IMR-90 (cell line): ENCODE measurements at regions of chr5 and their contacts with region 1.

Region 1: DNA sequence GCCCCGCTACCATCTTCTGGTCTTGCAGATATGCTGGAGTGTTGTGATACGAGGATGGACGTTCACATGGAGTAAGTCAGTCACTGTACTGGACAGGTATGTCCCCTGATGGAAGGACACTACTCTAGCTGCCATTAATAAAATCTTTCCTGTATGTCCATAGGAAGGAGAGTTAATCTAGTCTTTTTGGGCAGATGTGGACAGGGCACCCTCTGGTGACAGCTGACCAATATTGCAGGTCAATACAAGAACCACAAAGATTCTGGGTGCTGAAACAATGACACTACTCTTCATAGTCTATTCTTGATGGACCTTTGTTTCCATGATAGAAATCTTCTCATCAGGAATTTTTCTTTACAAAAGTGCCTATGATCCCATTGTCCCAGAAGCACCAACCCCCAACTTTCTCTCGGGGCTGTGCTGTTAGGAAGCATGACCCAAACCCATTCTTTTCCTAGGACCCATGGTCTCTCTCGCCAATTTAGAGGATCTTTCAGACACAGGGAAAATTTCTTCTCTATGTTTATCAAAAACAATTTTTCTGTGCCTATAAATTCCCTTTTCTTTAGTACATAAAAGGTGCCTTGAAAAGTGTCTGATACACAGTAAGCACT is 376.9 kb downstream of the DTWD2 start:
- DNase-seq: peak; percentile 17
- ATAC-seq: peak; percentile 73
- H3K4me3 ChIP-seq: no peak overlapping the region
- H3K27ac ChIP-seq: no peak overlapping the region
- H3K4me1 ChIP-seq: no peaks in the 10 kb centered on the region
- H3K27me3 ChIP-seq: no peaks in the 10 kb centered on the region
- CTCF ChIP-seq: peak; percentile 56
- POLR2A ChIP-seq: no peak
- RAD21 ChIP-seq: peak; percentile 70

Region 2: DNA sequence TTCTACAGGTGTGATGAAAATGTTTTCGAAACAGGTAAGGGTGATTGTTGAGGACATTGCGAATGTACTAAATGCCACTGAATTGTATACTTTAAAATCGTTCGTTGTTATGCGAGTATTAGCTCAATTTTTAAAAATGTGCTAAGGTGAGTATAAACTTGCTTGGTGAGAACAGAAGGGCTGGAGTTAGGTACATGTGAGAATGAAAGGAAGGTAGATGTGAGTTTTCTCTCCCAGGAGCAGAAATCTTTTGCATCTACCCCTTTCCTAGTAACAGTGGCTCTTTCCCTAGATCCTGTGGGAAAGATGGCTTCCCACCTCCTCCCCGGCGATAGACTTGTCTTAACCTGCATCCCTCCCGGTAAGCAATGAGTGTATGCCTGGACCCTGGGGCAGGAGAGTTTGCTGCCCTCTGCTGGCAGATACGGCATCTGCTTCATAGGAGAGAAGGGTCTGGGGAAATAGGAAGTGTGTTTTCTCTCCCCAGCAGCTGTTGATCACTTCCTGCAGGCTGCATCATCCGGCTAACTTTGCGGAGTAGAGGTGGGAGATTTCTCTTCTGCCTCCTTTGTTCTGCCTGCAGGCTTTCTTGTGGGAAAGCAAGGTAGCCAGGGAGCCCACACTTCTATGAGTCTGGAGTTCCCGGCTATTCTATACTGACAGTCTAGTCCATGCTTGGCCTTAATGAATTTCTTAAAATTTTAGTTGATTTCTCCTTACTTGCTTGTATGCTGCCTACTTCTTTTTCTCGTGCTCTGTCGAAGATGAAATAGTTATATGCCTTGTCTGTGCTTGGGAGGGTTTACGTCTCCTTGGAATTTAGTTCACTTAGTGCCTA is 1663.5 kb before region 1 on chr5:
- CTCF ChIA-PET with region 1: no interaction called
- POLR2A ChIA-PET with region 1: no interaction called
- dilution Hi-C with region 1: no loop called
- in situ Hi-C with region 1: no loop called
- intact Hi-C with region 1: loop called (anchors 10 kb)
- DNase-seq: no peak
- ATAC-seq: no peak
- H3K4me3 ChIP-seq: no peak overlapping the region
- H3K27ac ChIP-seq: no peak overlapping the region
- H3K4me1 ChIP-seq: no peaks in the 10 kb centered on the region
- H3K27me3 ChIP-seq: no peaks in the 10 kb centered on the region
- CTCF ChIP-seq: no peak
- POLR2A ChIP-seq: no peak
- RAD21 ChIP-seq: no peak

Region 3: DNA sequence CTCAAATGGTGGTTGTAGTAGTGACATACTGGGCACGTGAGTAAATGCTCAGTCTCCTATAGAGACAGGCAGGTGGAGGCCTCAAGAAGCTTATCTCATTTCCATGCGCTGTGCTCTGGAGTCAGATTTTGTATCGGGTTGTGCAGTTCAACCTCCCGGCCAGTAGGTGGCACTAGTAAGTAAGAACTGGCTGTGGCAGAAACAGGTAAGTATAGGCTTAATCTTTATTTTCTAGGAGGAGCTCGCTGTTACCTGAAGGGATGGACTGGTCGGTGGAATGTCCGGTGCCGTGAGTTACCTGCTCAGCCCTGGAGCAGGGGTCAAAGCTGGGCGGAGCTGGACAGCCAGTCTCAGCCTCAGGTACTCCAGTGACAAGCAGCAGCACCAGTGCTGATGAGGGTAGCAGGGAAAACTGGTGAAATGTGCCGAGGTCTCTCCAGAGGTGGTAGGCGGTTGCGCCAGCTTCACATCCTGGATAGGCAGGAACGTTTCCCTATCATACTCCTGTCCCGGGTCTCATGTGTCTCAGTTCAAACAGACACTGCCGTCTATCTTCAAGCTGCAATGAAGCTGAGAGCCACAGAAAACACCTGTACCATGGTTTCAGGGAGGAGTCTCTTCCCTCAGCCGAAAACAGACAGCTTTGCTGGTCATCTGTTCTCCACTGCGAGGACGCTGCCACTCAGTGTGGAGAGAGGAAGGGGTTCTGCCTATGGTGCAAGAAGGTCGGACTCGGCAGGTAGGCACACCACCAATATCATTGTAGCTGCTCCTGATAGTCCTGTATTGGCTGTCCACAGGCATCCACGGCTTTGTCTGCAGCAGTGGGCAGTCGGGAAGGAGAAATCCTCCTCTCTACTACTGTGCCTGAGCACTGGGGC is 1156.5 kb before region 1 on chr5:
- CTCF ChIA-PET with region 1: no interaction called
- POLR2A ChIA-PET with region 1: no interaction called
- dilution Hi-C with region 1: no loop called
- in situ Hi-C with region 1: no loop called
- intact Hi-C with region 1: no loop called
- DNase-seq: peak; percentile 6
- ATAC-seq: peak; percentile 53
- H3K4me3 ChIP-seq: no peak overlapping the region
- H3K27ac ChIP-seq: no peak overlapping the region
- H3K4me1 ChIP-seq: no peaks in the 10 kb centered on the region
- H3K27me3 ChIP-seq: no peaks in the 10 kb centered on the region
- CTCF ChIP-seq: peak; percentile 52
- POLR2A ChIP-seq: no peak
- RAD21 ChIP-seq: peak; percentile 60

Region 4: DNA sequence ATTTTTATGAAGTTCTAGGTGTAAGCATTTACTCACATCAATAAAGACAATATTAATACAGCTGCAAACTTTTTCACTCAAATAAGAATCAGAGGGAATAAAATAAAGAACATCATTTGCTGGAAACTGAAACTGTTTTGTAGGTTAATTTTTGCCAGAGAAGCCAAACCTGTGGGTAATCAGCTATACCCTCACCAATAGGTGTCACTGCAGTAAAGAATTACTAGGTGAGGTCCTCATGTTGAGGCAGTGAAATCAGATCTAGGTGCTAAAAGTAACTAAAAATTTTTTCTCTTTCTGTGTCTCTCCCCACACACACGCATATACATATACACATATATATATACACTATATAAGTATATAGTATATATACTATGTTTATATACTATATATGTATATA is 1020.5 kb before region 1 on chr5:
- CTCF ChIA-PET with region 1: no interaction called
- POLR2A ChIA-PET with region 1: no interaction called
- dilution Hi-C with region 1: no loop called
- in situ Hi-C with region 1: no loop called
- intact Hi-C with region 1: loop called (anchors 2 kb)
- DNase-seq: peak; percentile 8
- ATAC-seq: no peak
- H3K4me3 ChIP-seq: no peak overlapping the region
- H3K27ac ChIP-seq: no peak overlapping the region
- H3K4me1 ChIP-seq: no peaks in the 10 kb centered on the region
- H3K27me3 ChIP-seq: no peaks in the 10 kb centered on the region
- CTCF ChIP-seq: peak; percentile 45
- POLR2A ChIP-seq: no peak
- RAD21 ChIP-seq: peak; percentile 54

Region 5: GRCh38 chr5:118956727-118957126 is 345.3 kb after region 1 on chr5:
- CTCF ChIA-PET with region 1: no interaction called
- POLR2A ChIA-PET with region 1: no interaction called
- dilution Hi-C with region 1: no loop called
- in situ Hi-C with region 1: no loop called
- intact Hi-C with region 1: loop called (anchors 10 kb)
- DNase-seq: peak; percentile 22
- ATAC-seq: peak; percentile 60
- H3K4me3 ChIP-seq: no peak overlapping the region
- H3K27ac ChIP-seq: no peak overlapping the region
- H3K4me1 ChIP-seq: no peaks in the 10 kb centered on the region
- H3K27me3 ChIP-seq: no peaks in the 10 kb centered on the region
- CTCF ChIP-seq: peak; percentile 51
- POLR2A ChIP-seq: no peak
- RAD21 ChIP-seq: peak; percentile 62

Region 6: DNA sequence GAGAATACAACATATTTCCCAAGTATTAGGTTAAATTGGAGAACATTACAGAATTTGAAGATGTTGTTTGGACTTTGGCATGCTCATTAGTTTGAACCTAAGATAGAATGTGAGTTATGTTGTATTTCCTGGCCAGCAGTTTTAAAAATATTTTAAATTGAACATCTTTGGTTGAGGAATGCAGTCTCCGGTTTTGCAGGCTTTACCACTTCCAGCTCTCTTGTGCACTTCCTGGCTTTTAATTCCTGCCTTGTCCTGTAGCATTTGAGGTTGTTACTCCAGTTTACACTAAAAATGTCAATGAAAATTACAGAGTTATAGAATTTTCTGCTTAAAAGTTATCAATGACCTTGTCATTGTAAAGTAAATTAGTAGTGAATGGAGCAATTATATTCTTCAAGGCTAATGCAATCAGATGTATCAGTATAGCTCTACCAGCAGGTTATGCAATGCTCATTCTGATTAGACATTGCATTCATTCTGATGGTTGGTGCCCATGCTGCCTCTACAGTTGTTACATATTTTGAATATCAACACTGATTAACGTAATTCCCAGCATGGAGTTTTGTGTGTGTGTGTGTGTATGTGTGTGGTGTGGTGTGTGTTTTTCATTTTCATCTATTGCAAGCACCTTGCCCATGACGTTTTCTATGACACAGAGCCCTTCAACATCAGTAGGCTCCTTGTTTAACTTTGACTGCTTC is 1363.4 kb after region 1 on chr5:
- CTCF ChIA-PET with region 1: no interaction called
- POLR2A ChIA-PET with region 1: no interaction called
- dilution Hi-C with region 1: no loop called
- in situ Hi-C with region 1: no loop called
- intact Hi-C with region 1: no loop called
- DNase-seq: no peak
- ATAC-seq: no peak
- H3K4me3 ChIP-seq: no peak overlapping the region
- H3K27ac ChIP-seq: no peak overlapping the region
- H3K4me1 ChIP-seq: no peaks in the 10 kb centered on the region
- H3K27me3 ChIP-seq: no peaks in the 10 kb centered on the region
- CTCF ChIP-seq: no peak
- POLR2A ChIP-seq: no peak
- RAD21 ChIP-seq: no peak